Activated CD8-positive, alpha-beta T cell treated with anti-CD3 and anti-CD28 coated beads, Interleukin-2, amount 10 ng/mL, durations not matched to agents 7 days and 5 days (primary cell): ENCODE measurements at regions of chr11 and their contacts with region 1.

Region 1: DNA sequence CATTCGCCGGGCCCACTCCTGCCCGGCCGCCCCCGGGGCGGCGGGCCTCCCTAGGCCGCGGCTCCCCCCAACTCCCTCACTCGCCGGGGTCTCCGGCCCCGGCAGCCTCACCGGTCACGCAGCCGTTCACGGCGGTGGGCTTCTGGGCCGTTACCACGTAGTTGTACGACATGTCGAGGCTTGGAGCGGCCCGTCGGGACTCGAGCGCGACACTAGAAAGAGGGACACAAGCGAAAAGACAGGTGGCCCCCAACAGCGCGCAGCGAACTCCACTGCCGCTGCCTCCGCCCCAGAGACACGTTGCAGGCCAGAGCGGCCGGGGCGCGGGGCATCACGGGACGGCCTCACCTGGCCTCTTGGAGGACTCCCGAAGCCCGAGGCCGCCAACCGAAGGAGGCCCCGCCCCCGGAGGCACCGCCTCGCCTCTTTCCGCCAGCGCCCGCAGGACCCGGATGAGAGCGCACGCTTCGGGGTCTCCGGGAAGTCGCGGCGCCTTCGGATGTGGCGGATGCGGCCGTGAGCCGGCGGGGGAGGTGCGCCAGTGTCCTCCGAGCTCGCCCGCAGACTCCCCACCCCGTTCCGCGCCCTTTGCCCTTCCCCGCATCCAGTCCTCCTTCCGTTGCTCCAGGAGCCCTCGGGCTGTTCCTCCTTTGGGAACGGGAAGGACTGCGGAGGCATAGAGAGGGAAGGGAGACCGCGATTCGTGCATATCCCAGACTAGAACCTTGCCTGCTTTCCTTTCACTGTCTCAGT is at the starts of genes DDB1 and TKFC:
- DNase-seq: peak; percentile 98
- ATAC-seq: peak; percentile 94
- H3K4me3 Mint-ChIP-seq: peak within 1 kb of the TSS; percentile 81
- H3K27ac Mint-ChIP-seq: peak within 1 kb of the TSS; percentile 94
- H3K4me1 Mint-ChIP-seq: peaks cover 67% of the 10 kb centered on the region
- H3K27me3 Mint-ChIP-seq: no peaks in the 10 kb centered on the region
- total RNA-seq, gene DDB1: 202 to 214 TPM
- total RNA-seq, gene TKFC: 24.1 to 26.4 TPM

Region 2: GRCh38 chr11:60994541-60995080 is 338.4 kb before region 1 on chr11:
- CTCF ChIA-PET with region 1: no interaction called
- POLR2A ChIA-PET with region 1: no interaction called
- DNase-seq: no peak
- ATAC-seq: peak; percentile 35
- H3K4me3 Mint-ChIP-seq: peak overlapping the region; percentile 22
- H3K27ac Mint-ChIP-seq: peak overlapping the region; percentile 86
- H3K4me1 Mint-ChIP-seq: peaks cover 56% of the 10 kb centered on the region
- H3K27me3 Mint-ChIP-seq: no peaks in the 10 kb centered on the region

Region 3: GRCh38 chr11:61347916-61348461 is 15.0 kb after region 1 on chr11:
- CTCF ChIA-PET with region 1: interaction called, 34 read pairs
- POLR2A ChIA-PET with region 1: interaction called, 3 read pairs
- DNase-seq: no peak
- ATAC-seq: no peak
- H3K4me3 Mint-ChIP-seq: no peak overlapping the region
- H3K27ac Mint-ChIP-seq: no peak overlapping the region
- H3K4me1 Mint-ChIP-seq: peaks cover 15% of the 10 kb centered on the region
- H3K27me3 Mint-ChIP-seq: no peaks in the 10 kb centered on the region

Region 4: DNA sequence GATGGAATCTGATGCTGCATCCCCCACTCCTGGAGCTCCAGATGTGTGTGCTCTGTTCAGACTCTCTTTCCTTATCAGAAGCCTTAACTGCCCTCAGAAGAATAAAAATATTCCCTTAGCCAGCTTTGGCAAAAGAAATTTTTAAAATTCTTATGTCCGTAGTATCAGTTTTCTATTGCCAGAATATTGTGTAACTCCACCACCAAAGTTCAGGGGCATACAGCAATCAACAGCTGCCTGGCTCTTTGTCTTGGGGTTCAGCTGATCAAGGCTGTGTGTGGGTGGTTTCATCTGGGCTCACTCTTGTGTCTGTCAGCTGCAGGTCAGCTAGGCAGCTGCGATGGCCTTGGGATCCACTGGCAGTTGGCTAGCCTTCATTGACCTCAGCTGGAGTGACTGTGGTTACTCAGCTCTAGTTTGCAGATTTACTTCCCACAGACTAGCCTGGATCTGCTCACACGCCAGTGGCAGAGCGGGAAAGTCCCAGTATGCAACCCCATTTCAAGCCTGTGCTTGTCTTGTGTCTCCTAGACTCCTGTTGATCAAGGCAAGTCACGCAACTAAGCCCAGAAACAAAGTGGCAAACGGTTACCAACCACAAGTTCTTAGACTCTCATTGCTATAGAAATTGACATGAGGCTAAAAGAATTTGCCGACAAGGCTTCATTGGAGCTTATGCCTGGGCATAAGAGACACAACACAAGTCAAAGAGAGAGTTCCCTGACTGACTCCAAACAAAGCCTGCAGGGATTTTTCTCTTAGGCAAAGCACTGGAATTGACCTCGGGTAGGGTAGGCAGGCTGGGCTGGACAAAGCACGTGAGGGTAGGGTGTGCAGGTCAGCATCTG is 36.6 kb after region 1 on chr11:
- CTCF ChIA-PET with region 1: interaction called, 20 read pairs
- POLR2A ChIA-PET with region 1: interaction called, 72 read pairs
- DNase-seq: no peak
- ATAC-seq: no peak
- H3K4me3 Mint-ChIP-seq: no peak overlapping the region
- H3K27ac Mint-ChIP-seq: peak overlapping the region; percentile 18
- H3K4me1 Mint-ChIP-seq: peaks cover 14% of the 10 kb centered on the region
- H3K27me3 Mint-ChIP-seq: no peaks in the 10 kb centered on the region

Region 5: GRCh38 chr11:61392981-61393595 is 60.1 kb after region 1 on chr11:
- CTCF ChIA-PET with region 1: interaction called, 93 read pairs
- POLR2A ChIA-PET with region 1: interaction called, 20 read pairs
- DNase-seq: peak; percentile 29
- ATAC-seq: peak; percentile 35
- H3K4me3 Mint-ChIP-seq: peak overlapping the region; percentile 80
- H3K27ac Mint-ChIP-seq: peak overlapping the region; percentile 94
- H3K4me1 Mint-ChIP-seq: peaks cover 27% of the 10 kb centered on the region
- H3K27me3 Mint-ChIP-seq: peaks cover 3% of the 10 kb centered on the region

Region 6: GRCh38 chr11:61446211-61446651 is 113.3 kb after region 1 on chr11:
- CTCF ChIA-PET with region 1: interaction called, 12 read pairs
- POLR2A ChIA-PET with region 1: interaction called, 4 read pairs
- DNase-seq: peak; percentile 83
- ATAC-seq: peak; percentile 93
- H3K4me3 Mint-ChIP-seq: no peak overlapping the region
- H3K27ac Mint-ChIP-seq: no peak overlapping the region
- H3K4me1 Mint-ChIP-seq: peaks cover 2% of the 10 kb centered on the region
- H3K27me3 Mint-ChIP-seq: no peaks in the 10 kb centered on the region